Cardiac septum (tissue), 1 donor: ENCODE measurements at regions of chr11 and their contacts with region 1.

Region 1: GRCh38 chr11:69918938-69919650 is 99.9 kb upstream of the FGF3 start:
- DNase-seq: peak; percentile 89

Region 2: DNA sequence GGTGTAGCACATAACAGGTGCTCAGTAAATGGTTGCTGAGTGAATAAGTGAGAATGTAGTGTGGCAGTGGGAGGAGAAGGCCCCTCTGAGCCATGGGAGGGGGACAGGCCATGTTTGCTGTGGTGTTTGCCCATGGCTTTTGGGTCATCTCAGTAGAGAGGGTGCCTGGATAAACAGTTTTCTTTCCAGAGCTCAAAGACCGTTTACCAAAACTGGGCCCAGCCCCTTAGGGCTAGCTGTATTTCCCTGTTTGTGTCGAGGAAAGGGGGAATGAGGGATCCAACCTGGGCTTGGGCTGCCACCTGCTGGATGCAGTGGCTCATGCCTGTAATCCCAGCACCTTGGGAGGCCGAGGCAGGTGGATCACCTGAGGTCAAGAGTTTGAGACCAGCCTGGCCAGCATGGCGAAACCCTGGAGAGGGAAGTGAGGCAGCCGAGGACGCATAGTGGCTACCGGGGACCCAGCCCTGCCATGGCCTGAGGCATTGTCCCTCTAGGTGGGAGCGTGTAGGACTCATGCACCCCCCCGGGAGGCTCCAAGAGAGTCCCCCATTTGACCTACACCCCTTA is 235.2 kb before region 1 on chr11:
- intact Hi-C with region 1: loop called (anchors 10 kb)
- DNase-seq: peak; percentile 63

Region 3: DNA sequence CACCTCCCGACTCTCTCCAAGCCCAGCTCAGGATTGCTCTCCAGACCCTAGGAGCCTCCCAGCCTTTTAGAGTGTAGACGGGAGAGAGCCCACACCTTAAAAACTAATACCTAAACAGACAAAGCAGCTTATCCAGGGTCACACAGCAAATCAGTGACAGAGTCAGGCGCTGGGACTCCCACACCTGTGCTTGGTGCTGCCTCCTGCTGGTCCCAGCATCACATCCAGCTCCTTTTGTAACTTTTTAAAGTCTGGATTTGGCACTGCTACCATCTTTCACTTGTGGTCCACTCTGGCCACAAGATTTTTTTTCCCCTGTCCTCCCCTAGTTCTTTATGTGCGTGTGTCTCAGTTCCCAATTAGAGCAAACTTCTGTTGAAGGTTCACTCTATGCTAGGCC is 163.7 kb after region 1 on chr11:
- intact Hi-C with region 1: loop called (anchors 5 kb)
- DNase-seq: no peak

Region 4: DNA sequence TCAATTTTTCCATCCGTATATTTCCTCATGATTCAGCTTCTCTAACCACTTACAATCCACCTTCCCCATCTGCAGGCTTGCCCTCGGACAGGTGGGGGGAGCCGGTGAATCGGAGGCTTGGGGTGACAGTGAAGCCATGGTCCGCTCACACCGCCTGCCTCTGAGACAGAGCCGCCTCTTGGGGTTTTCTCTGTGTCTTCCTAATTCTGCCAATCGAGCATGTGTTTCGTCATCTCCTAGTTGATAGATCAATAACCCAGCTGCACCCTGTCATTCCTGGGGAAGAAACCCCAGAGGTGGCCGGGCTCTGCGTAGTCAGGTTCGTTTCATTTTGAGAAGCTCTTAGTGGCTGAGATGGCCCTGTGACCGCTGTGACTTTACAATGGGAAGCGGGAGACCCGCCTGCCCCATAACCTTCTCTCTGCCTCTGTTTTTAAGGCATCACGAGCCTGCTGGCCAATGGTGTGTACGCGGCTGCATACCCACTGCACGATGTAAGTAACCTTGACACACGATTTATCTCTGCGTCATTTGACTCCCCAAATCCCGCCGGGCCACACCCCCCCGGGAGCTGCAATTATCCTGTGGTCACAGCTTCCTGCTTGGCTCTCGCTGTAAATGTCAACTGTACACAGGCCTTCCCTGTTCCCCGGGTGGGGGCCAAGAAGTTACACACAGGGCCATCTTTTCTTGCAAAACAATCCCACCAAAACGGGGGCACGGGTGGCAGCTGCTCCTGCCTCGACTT is 192.3 kb after region 1 on chr11:
- intact Hi-C with region 1: loop called (anchors 10 kb)
- DNase-seq: no peak

Region 5: DNA sequence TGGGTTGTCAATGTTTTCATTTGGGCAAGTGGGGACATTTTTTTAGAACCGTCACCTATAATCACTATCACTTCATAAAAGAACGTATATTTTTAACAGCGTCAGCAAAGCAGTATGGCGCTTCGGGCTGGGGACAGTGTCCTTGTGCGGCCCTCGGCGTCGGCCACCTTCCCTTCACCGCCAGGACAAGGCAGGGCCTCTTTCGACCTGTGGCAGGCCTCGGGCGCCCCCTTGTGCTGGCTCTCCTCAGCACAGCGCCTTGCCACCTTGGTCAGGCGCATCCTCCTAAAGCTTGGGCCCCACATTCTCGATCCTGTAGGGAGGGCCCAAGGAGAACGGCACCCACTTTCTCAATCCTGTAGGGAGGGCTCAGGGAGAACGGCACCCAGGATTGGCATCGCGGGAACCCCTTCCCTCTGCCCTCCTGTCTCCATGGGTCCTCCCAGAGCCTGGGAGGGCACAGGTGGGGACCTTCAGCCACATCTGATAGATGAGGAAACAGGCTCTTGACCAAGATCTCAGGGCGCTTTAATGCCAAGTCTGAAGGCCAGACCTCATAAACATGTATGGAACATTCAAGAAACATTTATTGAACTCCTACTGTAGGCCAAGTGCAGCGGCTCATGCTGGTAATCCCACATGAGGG is 272.5 kb after region 1 on chr11:
- intact Hi-C with region 1: loop called (anchors 1 kb)
- DNase-seq: peak; percentile 90